ENCODE measurements at regions of chr1 and their contacts with region 1.

Region 1: GRCh38 chr1:68470388-68470970 is 20.7 kb upstream of the RPE65 start:
- DNase-seq: peak in 2 of 3 donors; percentile 31 to 50
- H3K4me3 ChIP-seq: no peak overlapping the region
- H3K27ac ChIP-seq: no peak overlapping the region
- H3K4me1 ChIP-seq: no peaks in the 10 kb centered on the region
- H3K27me3 ChIP-seq: no peaks in the 10 kb centered on the region

Region 2: GRCh38 chr1:68429233-68429808 is 41.2 kb before region 1 on chr1:
- CTCF ChIA-PET with region 1: no interaction called
- POLR2A ChIA-PET with region 1: no interaction called
- DNase-seq: no peak
- H3K4me3 ChIP-seq: no peak overlapping the region
- H3K27ac ChIP-seq: no peak overlapping the region
- H3K4me1 ChIP-seq: no peaks in the 10 kb centered on the region
- H3K27me3 ChIP-seq: no peaks in the 10 kb centered on the region

Region 3: DNA sequence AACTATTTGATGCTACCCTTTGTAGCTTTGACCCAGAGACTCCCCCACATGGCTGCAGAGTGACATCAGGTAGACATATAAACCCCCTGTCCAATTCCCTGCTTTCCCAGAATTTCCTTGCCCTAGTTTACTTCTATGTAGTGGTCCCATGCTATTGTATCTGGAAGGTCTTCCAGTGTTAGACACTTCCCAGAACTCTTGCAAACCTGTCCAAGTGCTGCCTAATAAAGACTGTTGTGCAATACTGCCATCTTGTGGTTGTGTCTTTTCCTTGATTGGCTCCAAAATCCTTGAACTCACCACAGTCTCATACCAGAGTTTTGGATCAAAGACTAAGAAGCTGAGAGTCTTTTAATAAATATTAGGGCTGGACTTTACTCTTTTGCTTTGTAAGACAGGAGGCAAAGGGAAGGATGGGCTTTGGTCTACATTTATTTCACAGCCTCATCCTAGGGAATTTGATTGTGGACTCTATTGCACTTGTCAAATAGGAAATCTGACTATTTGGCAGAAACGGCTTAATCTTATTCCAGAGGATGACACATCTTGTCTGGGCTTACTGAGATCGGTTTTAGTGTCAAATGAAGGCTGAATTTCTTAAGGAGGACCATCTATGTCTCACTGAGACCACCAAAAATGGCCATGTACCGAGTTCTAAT is 1267.2 kb after region 1 on chr1:
- CTCF ChIA-PET with region 1: interaction called, 16 read pairs
- POLR2A ChIA-PET with region 1: no interaction called
- DNase-seq: peak; percentile 66 to 82 (median 77)
- H3K4me3 ChIP-seq: no peak overlapping the region
- H3K27ac ChIP-seq: no peak overlapping the region
- H3K4me1 ChIP-seq: no peaks in the 10 kb centered on the region
- H3K27me3 ChIP-seq: no peaks in the 10 kb centered on the region

Measured in common myeloid progenitor, CD34-positive (primary cell).